A549 (cell line): ENCODE measurements at regions of chr17 and their contacts with region 1.

Region 1: DNA sequence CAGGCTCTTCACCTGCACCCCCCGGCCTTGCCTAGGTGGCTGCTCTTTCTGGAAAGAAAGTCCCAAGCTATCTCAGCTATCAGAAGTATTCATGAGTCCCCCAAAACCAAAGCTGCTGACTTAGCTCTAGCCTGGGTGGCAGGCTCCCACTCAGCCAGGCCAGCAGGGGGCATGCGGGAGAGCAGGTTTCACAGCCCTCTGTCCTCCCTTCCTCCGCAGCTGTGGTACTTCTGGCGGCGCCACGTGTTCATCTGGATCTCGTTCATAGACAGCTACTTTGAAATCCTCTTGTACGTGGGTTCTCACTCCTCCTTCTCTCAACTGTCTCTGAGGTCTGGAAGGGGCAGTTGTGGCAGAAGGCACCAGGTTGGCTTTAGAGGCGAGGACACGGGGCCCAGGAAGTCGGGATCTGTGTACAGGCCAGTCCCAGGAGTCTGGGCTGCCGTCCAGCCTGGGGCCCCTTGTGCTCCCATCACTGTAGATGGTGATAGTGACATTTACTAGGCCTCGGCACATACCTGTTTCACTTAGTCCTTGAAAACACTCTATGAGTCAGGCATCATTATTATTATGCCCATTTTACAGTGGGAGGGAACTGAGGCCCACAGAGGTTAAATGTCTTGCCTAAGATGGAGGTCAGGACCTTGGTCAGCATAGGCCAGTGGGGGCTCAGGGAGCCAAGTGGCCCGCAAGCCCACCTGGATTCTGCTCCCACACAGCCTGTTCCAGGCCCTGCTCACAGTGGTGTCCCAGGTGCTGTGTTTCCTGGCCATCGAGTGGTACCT is 12.9 kb downstream of the TRPV2 start:
- DNase-seq: peak; percentile 83 to 93
- ATAC-seq: peak; percentile 83 to 96
- H3K4me3 ChIP-seq: no peak overlapping the region
- H3K27ac ChIP-seq: peak overlapping the region; percentile 50 to 70; a peak in 5 of 6 replicates
- H3K4me1 ChIP-seq: 0 out of 3 replicates have a peak, but pooled peaks cover 3% of the 10 kb centered on the region
- CTCF ChIP-seq: peak; percentile 71
- EP300 ChIP-seq: no peak
- POLR2A ChIP-seq: no peak
- RAD21 ChIP-seq: peak; percentile 48 to 61; a peak in 4 of 5 replicates

Region 2: DNA sequence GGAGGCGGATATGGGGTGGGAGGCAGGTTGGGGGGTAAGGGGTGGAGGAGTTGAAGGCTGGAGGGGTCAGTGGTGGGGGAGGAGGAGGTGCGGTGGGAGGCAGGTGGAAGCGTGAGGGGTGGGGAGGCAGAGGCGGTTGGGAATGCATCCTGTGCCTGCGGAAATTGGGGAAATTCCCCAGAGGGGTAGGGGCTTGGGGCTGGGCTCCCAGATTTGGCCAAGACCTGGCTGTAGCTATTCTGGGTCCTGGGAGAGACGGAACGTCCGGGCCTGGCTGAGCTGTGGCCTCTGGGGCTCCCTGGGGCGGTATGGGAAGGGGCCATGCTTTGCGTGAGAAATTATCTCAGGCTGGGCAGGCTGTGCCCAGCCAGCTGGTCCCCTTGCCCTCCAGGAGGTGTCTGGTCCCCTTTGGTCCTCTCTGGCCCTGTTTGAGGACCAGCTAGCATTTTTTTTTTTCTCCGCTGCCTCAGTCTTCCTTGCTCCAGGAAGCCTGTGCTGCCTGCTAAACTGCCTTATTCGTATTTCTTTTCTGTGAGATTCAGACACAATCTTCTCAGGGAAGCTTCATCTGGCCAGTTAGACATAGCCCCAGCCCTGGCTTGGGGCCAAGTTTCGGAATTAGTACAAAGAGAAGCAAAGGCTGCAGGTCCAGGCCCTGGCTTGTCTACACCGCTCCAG is 20.2 kb before region 1 on chr17:
- CTCF ChIA-PET with region 1: interaction called, 69 read pairs
- POLR2A ChIA-PET with region 1: interaction called, 14 read pairs
- DNase-seq: peak in 1 of 2 experiments; percentile 60
- ATAC-seq: peak; percentile 56 to 69
- H3K4me3 ChIP-seq: no peak overlapping the region
- H3K27ac ChIP-seq: peak overlapping the region in 1 of 2 experiments; percentile 87; a peak in 4 of 6 replicates
- H3K4me1 ChIP-seq: peaks cover 19% of the 10 kb centered on the region
- CTCF ChIP-seq: no peak
- EP300 ChIP-seq: no peak
- POLR2A ChIP-seq: no peak
- RAD21 ChIP-seq: no peak

Region 3: GRCh38 chr17:16415031-16415924 is 13.0 kb before region 1 on chr17 and contains the start of gene TRPV2:
- CTCF ChIA-PET with region 1: interaction called, 69 read pairs
- POLR2A ChIA-PET with region 1: interaction called, 6 read pairs
- DNase-seq: peak; percentile 53 to 55
- ATAC-seq: peak; percentile 40 to 81; a peak in 3 of 6 replicates
- H3K4me3 ChIP-seq: no peak within 1 kb of the TSS
- H3K27ac ChIP-seq: peak within 1 kb of the TSS in 1 of 2 experiments; percentile 39; a peak in 3 of 6 replicates
- H3K4me1 ChIP-seq: peaks cover 22% of the 10 kb centered on the region
- CTCF ChIP-seq: peak; percentile 46
- EP300 ChIP-seq: no peak
- POLR2A ChIP-seq: no peak
- RAD21 ChIP-seq: peak; percentile 29 to 55; a peak in 4 of 5 replicates
- polyA plus RNA-seq, gene TRPV2: 0.31 and 0.60 TPM in 2 replicates

Region 4: DNA sequence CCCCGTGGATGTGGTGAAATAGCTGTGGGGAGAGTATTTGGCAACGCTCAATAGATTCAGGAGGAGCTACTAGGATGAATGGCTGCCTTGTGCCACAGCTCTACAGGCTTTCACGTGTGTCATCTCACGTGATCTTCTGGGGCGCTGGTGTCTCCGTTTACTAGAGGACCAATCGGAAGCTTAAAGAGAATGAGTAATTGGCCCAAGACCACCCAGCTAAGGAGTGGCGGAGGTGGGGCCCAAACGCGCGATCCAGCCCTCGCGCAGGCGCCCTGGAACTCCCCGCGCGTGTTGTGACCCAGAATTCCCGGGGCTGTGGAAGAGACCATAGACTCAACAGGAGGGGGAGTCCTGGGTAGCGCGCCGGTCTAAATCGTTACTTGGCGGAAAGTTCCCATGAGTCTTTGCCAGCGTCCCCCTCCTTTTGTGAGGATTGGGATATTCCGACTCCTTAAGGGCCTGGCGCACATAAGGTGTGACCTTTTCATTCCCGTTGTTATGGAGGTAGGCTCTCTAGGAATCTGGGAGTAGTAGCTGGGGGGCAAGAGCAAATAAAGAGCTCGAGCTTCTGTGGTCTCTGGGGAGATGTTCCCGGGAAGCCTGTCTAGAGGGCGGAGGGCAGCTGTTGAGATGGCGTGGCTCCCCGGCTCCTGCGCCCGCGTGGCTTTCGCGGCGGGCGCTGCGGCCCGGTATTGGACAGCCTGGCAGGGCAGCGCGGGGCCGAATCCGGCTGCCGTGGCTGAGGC is 10.4 kb after region 1 on chr17:
- CTCF ChIA-PET with region 1: interaction called, 40 read pairs
- POLR2A ChIA-PET with region 1: interaction called, 43 read pairs
- DNase-seq: peak; percentile 100
- ATAC-seq: peak; percentile 84 to 89
- H3K4me3 ChIP-seq: peak overlapping the region; percentile 75
- H3K27ac ChIP-seq: peak overlapping the region; percentile 90 to 99
- H3K4me1 ChIP-seq: peaks cover 37% of the 10 kb centered on the region
- CTCF ChIP-seq: no peak
- EP300 ChIP-seq: no peak
- POLR2A ChIP-seq: peak; percentile 96
- RAD21 ChIP-seq: no peak; a peak in 1 of 5 replicates